Left cardiac atrium (tissue), 4 donors: ENCODE measurements at regions of chr7 and their contacts with region 1.

Region 1: DNA sequence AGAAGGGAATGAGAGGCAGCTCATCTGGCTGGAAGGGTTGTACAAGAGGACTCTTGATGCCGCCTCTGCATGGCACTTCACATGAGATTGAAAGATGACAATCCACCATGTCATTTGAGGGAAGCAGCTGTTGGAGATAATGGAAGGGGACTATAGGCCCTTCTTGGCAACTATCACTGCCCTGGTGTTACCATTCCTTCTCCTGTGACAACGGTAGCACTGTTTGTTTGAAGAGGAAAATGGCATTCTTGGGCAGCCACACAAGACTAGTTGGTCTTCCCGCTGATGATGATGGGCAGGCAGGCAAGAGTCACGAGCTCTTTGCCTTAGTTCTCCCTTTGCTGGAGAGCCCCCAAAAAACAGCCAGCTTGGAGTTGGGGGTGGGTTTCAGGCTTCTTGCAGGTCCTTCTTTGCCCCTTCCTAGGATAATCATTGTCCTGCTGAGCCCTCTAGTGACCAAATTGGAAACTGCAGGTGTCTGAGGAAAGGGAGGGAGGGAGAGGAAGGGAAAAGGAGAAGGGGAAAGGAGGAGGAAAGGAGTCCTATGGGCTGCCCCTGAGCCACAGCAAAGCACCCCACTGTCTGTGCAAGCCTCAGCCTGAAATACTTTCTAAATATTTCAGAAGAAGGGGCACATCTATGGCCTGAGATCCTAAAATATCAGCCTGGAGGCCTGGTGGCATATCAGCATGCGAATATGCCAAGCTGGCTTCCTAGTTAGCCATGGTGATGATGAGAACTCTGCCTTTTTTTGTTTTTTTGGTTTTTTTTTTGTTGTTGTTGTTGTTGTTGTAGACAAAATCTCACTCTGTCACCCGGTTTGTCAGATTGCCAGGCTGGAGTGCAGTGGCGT is 165.6 kb upstream of the KMT2E start:
- DNase-seq: no peak
- ATAC-seq: peak in 1 of 2 donors; percentile 32

Region 2: DNA sequence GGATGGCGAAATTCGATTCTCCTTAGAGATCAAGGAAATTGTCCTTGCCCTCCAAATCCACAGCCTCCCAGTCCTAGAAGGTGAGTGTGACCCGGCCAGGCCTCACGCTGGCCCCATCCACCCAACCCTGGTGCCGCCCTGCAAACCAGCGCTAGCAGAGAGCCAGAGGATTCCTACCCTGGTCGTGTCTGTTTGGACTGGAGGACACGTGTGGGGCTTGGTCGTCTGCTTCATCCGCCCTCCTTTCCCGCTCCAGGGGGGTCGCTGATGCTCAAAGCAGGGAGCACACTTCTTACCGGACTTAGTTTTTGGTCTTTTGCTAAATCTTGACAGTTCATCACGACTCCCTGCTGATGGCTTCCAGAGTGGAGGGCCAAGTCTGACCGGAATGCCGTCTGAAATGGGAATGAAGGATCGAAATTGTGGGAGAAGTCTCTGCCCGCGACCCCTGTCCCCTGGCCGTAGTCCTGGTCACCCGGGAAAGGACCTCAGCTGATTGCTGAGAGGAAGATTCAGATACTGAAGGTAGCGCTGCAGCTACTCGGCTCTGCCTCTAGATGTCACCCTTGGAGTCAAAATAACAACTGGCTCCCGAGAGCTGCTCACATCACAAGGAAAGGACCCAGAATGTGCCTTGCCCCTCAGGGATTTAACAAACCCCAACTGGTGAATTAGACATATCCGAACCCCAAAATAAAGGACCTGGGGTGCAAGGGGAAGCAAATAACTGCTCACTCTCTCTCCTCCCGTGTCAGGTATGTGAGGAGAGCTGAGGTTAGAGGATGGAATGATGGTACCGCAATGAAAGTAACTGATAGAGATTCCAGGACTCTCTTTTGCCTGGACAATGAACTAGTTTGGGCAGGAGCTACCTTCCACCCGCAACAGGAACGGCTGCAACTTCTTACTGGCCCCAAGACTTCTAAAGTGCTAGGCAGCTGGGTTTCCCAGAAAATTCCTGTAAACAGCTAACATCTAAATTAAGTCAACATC is 617.0 kb before region 1 on chr7:
- intact Hi-C with region 1: loop called in 1 of 2 experiments (anchors 5 kb)
- DNase-seq: peak; percentile 25
- ATAC-seq: peak; percentile 68 to 80

Region 3: GRCh38 chr7:104275907-104276306 is 572.5 kb before region 1 on chr7:
- intact Hi-C with region 1: loop called in 1 of 2 experiments (anchors 2 kb)
- DNase-seq: no peak
- ATAC-seq: no peak

Region 4: DNA sequence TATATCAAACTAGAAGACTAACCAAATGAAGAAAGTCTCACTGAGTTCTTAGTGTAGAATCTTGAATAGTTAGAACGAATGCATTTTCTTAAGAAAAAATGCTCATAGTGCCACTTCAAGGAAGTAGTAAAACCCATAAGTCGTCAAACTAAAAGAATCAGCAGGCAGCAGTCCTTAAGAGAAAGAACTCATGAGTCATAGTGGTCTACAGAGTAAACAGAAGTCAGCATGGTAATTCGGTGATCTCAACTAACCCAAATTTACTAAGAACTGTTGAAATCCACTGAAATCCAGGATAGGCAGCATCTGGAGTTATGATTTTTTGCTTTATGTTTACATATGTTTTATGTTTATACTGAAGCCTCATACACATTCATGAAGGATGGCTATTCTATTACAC is 263.7 kb before region 1 on chr7:
- intact Hi-C with region 1: no loop called
- DNase-seq: no peak
- ATAC-seq: no peak

Region 5: DNA sequence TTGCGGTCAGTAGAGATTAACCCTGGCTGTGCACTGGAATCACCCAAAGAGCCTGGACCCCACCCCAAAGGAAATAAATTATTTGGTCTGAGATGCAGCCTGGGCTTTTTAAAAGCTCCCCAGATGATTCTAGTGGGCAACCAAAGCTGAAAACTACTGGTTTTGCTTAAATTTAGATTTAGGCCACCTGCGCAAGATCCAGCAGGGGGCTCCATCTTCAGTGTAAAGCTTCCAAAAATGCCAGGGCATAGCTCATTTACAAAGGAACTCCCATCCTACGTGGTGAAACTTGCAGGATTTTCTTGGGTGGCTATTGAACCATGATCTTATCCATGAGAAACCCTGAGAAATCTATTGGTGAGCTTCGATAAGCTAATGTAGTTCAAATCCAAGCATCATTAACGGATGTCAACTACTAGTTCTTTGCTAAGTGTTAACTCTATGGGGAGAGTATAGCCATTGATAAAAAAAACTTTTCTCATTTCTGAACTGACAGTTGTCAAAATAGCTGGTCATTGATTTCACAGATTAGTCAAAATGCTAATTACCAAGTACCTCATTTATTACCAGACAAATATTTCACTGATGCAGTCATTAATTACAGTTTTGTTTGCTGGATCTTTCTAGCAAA is 204.7 kb before region 1 on chr7:
- intact Hi-C with region 1: loop called (anchors 5 to 10 kb)
- DNase-seq: no peak
- ATAC-seq: no peak

Region 6: GRCh38 chr7:104983578-104984539 is 135.5 kb after region 1 on chr7:
- intact Hi-C with region 1: no loop called
- DNase-seq: peak; percentile 94
- ATAC-seq: peak; percentile 95 to 96

Region 7: GRCh38 chr7:106041140-106041717 is 1192.9 kb after region 1 on chr7:
- intact Hi-C with region 1: no loop called
- DNase-seq: no peak
- ATAC-seq: no peak